Mammary epithelial cell (primary cell): ENCODE measurements at regions of chr1 and their contacts with region 1.

Region 1: DNA sequence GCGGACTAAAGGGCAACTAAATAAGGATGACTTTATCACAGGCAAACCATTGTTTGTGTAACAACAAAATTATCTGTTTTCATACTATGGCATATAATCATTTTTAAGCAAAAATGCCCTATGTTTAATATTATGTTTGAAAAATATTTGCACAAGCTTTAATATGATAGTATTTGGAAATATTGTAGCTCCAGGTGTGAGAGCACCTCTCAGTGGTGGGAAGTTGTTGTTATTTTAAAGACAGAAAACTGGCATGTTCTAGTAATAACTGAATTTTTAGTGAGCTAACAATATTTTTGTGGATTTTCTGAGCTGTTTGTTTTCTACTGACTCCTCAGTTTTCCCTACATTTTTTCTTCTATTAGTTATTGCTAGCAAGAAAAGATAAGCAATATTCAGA is 578.8 kb downstream of the KCNT2 start:
- DNase-seq: no peak
- H3K4me3 ChIP-seq: no peak overlapping the region
- H3K27ac ChIP-seq: no peak overlapping the region
- H3K4me1 ChIP-seq: no peaks in the 10 kb centered on the region
- H3K27me3 ChIP-seq: no peaks in the 10 kb centered on the region
- CTCF ChIP-seq: peak in 1 of 2 donors; percentile 45

Region 2: GRCh38 chr1:195981448-195982139 is 47.8 kb before region 1 on chr1:
- CTCF ChIA-PET with region 1: no interaction called
- dilution Hi-C with region 1: loop called (anchors 5 kb)
- in situ Hi-C with region 1: no loop called
- intact Hi-C with region 1: no loop called
- DNase-seq: peak; percentile 65
- H3K4me3 ChIP-seq: no peak overlapping the region
- H3K27ac ChIP-seq: no peak overlapping the region
- H3K4me1 ChIP-seq: peaks cover 3% of the 10 kb centered on the region
- H3K27me3 ChIP-seq: no peaks in the 10 kb centered on the region
- CTCF ChIP-seq: no peak

Region 3: DNA sequence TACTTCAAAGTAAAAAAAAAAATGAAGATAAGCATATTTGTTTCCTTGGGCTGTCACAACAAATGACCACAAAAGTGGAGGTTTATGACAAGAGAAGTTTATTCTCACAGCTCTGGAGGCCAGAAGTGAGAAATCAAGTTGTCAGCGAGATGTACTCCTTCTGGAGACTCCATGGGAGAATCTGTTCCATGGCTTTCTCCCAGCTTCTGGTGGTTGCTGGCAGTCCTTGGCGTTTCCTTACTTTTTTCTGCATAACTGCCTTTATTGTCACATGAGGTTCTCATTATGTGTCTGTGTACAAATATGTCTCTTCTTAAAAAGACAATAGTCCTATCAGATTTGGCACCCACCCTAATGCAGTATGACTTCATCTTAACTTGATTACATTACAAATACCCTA is 180.6 kb after region 1 on chr1:
- CTCF ChIA-PET with region 1: no interaction called
- dilution Hi-C with region 1: no loop called
- in situ Hi-C with region 1: no loop called
- intact Hi-C with region 1: no loop called
- DNase-seq: no peak
- H3K4me3 ChIP-seq: no peak overlapping the region
- H3K27ac ChIP-seq: no peak overlapping the region
- H3K4me1 ChIP-seq: peaks cover 5% of the 10 kb centered on the region
- H3K27me3 ChIP-seq: no peaks in the 10 kb centered on the region
- CTCF ChIP-seq: no peak